CD4-positive, alpha-beta T cell (primary cell): ENCODE measurements at regions of chr10 and their contacts with region 1.

Region 1: GRCh38 chr10:14648005-14648765 is 126.5 kb downstream of the FAM107B start:
- DNase-seq: peak; percentile 44 to 92 (median 65)
- ATAC-seq: peak; percentile 85
- H3K4me3 ChIP-seq: peak overlapping the region; percentile 55
- H3K4me3 Mint-ChIP-seq: peak overlapping the region; percentile 84
- H3K27ac ChIP-seq: peak overlapping the region; percentile 91 to 95
- H3K27ac Mint-ChIP-seq: peak overlapping the region; percentile 99
- H3K4me1 ChIP-seq: peaks cover 43% of the 10 kb centered on the region
- H3K4me1 Mint-ChIP-seq: peaks cover 69% of the 10 kb centered on the region
- H3K27me3 ChIP-seq: no peaks in the 10 kb centered on the region
- H3K27me3 Mint-ChIP-seq: no peaks in the 10 kb centered on the region
- CTCF ChIP-seq: no peak

Region 2: GRCh38 chr10:14564268-14564744 is 83.9 kb before region 1 on chr10:
- CTCF ChIA-PET with region 1: interaction called, 3 read pairs
- POLR2A ChIA-PET with region 1: interaction called, 10 read pairs
- intact Hi-C with region 1: loop called in 1 of 2 experiments (anchors 2 kb)
- DNase-seq: peak in 4 of 14 experiments; percentile 56 to 85 (median 78)
- ATAC-seq: peak; percentile 57
- H3K4me3 ChIP-seq: peak overlapping the region; percentile 32
- H3K4me3 Mint-ChIP-seq: peak overlapping the region; percentile 87
- H3K27ac ChIP-seq: peak overlapping the region; percentile 80 to 82
- H3K27ac Mint-ChIP-seq: peak overlapping the region; percentile 98
- H3K4me1 ChIP-seq: peaks cover 83% of the 10 kb centered on the region
- H3K4me1 Mint-ChIP-seq: peaks cover 97% of the 10 kb centered on the region
- H3K27me3 ChIP-seq: no peaks in the 10 kb centered on the region
- H3K27me3 Mint-ChIP-seq: no peaks in the 10 kb centered on the region
- CTCF ChIP-seq: no peak

Region 3: GRCh38 chr10:14723052-14723689 is 75.0 kb after region 1 on chr10:
- CTCF ChIA-PET with region 1: no interaction called
- POLR2A ChIA-PET with region 1: interaction called, 6 read pairs
- intact Hi-C with region 1: loop called in 1 of 2 experiments (anchors 2 kb)
- DNase-seq: peak; percentile 9 to 81 (median 27)
- ATAC-seq: peak; percentile 92
- H3K4me3 ChIP-seq: no peak overlapping the region
- H3K4me3 Mint-ChIP-seq: peak overlapping the region; percentile 34
- H3K27ac ChIP-seq: peak overlapping the region in 1 of 2 donors; percentile 65
- H3K27ac Mint-ChIP-seq: peak overlapping the region; percentile 83
- H3K4me1 ChIP-seq: peaks cover 22% of the 10 kb centered on the region
- H3K4me1 Mint-ChIP-seq: peaks cover 38% of the 10 kb centered on the region
- H3K27me3 ChIP-seq: no peaks in the 10 kb centered on the region
- H3K27me3 Mint-ChIP-seq: no peaks in the 10 kb centered on the region
- CTCF ChIP-seq: no peak